ENCODE measurements at regions of chr4 and their contacts with region 1.

Region 1: GRCh38 chr4:102826890-102827673 is at the start of gene UBE2D3:
- DNase-seq: peak; percentile 95
- H3K4me3 Mint-ChIP-seq: no peak within 1 kb of the TSS
- H3K27ac Mint-ChIP-seq: no peak within 1 kb of the TSS
- H3K4me1 Mint-ChIP-seq: peaks cover 39% of the 10 kb centered on the region
- H3K27me3 Mint-ChIP-seq: no peaks in the 10 kb centered on the region
- total RNA-seq, gene UBE2D3: 378 to 380 TPM

Region 2: DNA sequence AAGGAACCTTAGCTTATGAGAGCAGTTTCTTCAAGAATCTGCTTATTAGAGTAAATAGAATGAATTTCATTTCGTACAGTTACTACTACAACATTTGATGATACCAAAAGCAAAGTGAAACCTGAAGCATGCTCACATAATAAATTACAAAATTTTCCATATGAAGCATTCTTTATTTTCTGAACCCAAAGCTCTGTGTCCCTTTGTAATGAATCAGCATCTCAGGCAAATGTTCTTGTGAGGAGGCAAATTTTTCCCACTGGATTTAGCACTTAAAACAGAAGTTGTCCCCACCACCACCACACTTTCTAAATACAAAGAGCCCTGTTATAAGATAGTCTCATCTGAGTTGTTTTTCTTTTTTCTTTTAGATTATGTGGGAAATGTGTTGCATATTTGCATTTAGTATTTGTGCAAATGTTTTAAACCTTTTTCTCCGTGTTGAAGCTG is 396.6 kb before region 1 on chr4:
- CTCF ChIA-PET with region 1: interaction called, 10 read pairs
- POLR2A ChIA-PET with region 1: interaction called, 8 read pairs
- DNase-seq: no peak
- H3K4me3 Mint-ChIP-seq: peak overlapping the region; percentile 79
- H3K27ac Mint-ChIP-seq: peak overlapping the region; percentile 83
- H3K4me1 Mint-ChIP-seq: peaks cover 19% of the 10 kb centered on the region
- H3K27me3 Mint-ChIP-seq: peaks cover 14% of the 10 kb centered on the region

Region 3: GRCh38 chr4:102610007-102610406 is 217.1 kb before region 1 on chr4:
- CTCF ChIA-PET with region 1: no interaction called
- POLR2A ChIA-PET with region 1: interaction called, 15 read pairs
- DNase-seq: no peak
- H3K4me3 Mint-ChIP-seq: no peak overlapping the region
- H3K27ac Mint-ChIP-seq: peak overlapping the region; percentile 42
- H3K4me1 Mint-ChIP-seq: peaks cover 90% of the 10 kb centered on the region
- H3K27me3 Mint-ChIP-seq: no peaks in the 10 kb centered on the region

Region 4: GRCh38 chr4:102809190-102809589 is 17.9 kb before region 1 on chr4:
- CTCF ChIA-PET with region 1: interaction called, 6 read pairs
- POLR2A ChIA-PET with region 1: interaction called, 43 read pairs
- DNase-seq: no peak
- H3K4me3 Mint-ChIP-seq: no peak overlapping the region
- H3K27ac Mint-ChIP-seq: no peak overlapping the region
- H3K4me1 Mint-ChIP-seq: peaks cover 60% of the 10 kb centered on the region
- H3K27me3 Mint-ChIP-seq: no peaks in the 10 kb centered on the region

Region 5: GRCh38 chr4:102860611-102861324 is 33.7 kb after region 1 on chr4:
- CTCF ChIA-PET with region 1: interaction called, 4 read pairs
- POLR2A ChIA-PET with region 1: interaction called, 510 read pairs
- DNase-seq: no peak
- H3K4me3 Mint-ChIP-seq: no peak overlapping the region
- H3K27ac Mint-ChIP-seq: no peak overlapping the region
- H3K4me1 Mint-ChIP-seq: peaks cover 19% of the 10 kb centered on the region
- H3K27me3 Mint-ChIP-seq: no peaks in the 10 kb centered on the region

Region 6: GRCh38 chr4:103075901-103076739 is 249.0 kb after region 1 on chr4:
- CTCF ChIA-PET with region 1: interaction called, 5 read pairs
- POLR2A ChIA-PET with region 1: interaction called, 35 read pairs
- DNase-seq: peak; percentile 66
- H3K4me3 Mint-ChIP-seq: peak overlapping the region; percentile 86
- H3K27ac Mint-ChIP-seq: peak overlapping the region; percentile 92
- H3K4me1 Mint-ChIP-seq: peaks cover 47% of the 10 kb centered on the region
- H3K27me3 Mint-ChIP-seq: no peaks in the 10 kb centered on the region